Activated CD8-positive, alpha-beta T cell treated with anti-CD3 and anti-CD28 coated beads for 36 hours (primary cell): ENCODE measurements at regions of chr18 and their contacts with region 1.

Region 1: GRCh38 chr18:70082430-70082829 is 123.1 kb downstream of the RTTN start:
- DNase-seq: no peak
- ATAC-seq: no peak
- H3K4me3 Mint-ChIP-seq: no peak overlapping the region
- H3K27ac Mint-ChIP-seq: no peak overlapping the region
- H3K4me1 Mint-ChIP-seq: no peaks in the 10 kb centered on the region
- H3K27me3 Mint-ChIP-seq: no peaks in the 10 kb centered on the region
- CTCF ChIP-seq: no peak

Region 2: DNA sequence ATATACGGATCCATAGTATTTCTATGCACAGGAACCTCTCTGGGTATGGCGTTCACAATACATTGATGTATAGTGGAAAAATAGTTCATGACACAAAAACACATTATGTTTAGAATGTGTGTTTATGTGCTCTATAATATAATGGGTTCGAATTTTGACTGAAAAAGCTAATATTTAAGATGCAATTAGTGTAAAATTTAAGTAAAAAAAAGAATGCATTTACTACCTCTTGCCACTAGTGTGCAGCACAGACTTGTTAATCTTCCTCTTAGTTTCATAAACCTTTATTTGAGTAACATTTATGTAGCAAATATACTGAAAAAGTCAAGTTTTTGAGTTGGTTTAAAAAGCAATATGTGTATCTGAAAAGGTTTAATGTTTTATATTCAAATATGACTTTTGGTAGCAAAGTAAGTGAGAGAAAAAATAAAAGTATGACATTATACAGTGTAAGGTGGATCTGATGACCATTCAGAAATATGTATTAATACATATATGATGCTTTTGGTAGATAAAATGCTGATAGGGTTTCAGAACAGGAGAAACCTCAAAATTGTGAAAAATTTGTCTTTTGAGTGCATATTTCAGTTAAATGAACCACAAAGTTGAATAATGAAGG is 1235.1 kb before region 1 on chr18:
- CTCF ChIA-PET with region 1: no interaction called
- POLR2A ChIA-PET with region 1: no interaction called
- intact Hi-C with region 1: loop called (anchors 10 kb)
- DNase-seq: no peak
- ATAC-seq: no peak
- H3K4me3 Mint-ChIP-seq: no peak overlapping the region
- H3K27ac Mint-ChIP-seq: no peak overlapping the region
- H3K4me1 Mint-ChIP-seq: no peaks in the 10 kb centered on the region
- H3K27me3 Mint-ChIP-seq: no peaks in the 10 kb centered on the region
- CTCF ChIP-seq: peak; percentile 67

Region 3: DNA sequence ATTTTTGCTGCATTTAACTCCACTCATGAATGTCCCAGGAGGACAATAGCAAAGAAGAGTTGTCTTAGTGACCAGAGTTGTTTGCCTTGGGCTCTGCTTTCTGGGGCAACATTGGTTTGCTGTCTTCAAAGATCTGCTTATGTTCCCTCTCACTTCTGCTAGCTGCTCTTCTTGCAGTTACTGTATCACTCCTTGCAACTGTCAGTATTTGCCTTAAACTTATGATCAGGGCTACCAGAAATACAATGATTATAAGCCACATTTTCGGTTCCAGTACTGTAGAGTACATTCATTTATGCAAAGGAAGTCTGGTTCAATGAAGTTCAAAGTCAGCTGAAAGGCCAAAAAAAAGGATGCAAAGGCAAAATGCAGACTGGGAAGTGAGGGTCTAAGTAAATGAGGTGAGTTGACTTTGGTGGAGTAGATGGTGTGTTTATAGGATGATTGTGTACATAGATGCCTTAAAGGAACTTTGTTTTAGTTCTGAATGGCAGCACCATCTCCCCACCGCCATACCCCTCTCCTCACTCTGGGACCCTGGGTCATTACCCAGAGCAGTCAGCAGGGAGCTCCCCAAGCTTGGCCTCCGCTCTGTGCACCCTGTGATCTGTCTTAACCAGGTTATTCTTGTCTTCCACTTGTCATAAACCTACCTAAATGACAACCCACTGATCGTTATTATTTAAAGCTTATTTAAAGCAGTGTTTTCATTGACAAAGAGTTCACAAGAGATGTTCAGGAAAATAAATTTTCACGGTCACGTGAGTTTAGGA is 445.7 kb before region 1 on chr18:
- CTCF ChIA-PET with region 1: no interaction called
- POLR2A ChIA-PET with region 1: no interaction called
- intact Hi-C with region 1: loop called (anchors 5 kb)
- DNase-seq: peak; percentile 26
- ATAC-seq: peak; percentile 84
- H3K4me3 Mint-ChIP-seq: no peak overlapping the region
- H3K27ac Mint-ChIP-seq: no peak overlapping the region
- H3K4me1 Mint-ChIP-seq: no peaks in the 10 kb centered on the region
- H3K27me3 Mint-ChIP-seq: peaks cover 3% of the 10 kb centered on the region
- CTCF ChIP-seq: peak; percentile 31